HEK293 (cell line): ENCODE measurements at regions of chr17 and their contacts with region 1.

Region 1: DNA sequence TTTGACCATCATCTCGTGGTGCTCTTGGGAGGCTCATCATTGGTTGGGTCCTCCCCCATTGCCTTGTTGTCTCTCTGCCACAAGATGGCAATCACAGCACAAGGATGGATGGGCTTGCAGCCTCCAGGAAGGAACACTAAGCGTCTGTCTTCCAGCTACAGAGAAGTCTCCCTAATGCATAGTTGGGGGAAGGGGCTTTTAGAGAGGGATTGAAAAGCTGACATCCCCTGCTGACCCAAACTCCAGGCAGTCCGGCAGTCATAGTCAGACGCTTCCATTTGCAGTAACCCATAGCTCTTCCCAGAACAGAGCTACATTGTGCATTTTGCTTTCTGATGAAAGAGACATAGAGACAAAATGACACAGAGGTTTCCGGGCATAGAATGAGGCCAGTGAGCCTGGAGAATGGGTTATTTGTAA is 111.4 kb downstream of the UTP18 start:
- H3K4me3 ChIP-seq: no peak overlapping the region
- H3K27ac ChIP-seq: no peak overlapping the region
- H3K4me1 ChIP-seq: no peaks in the 10 kb centered on the region
- CTCF ChIP-seq: peak; percentile 78

Region 2: DNA sequence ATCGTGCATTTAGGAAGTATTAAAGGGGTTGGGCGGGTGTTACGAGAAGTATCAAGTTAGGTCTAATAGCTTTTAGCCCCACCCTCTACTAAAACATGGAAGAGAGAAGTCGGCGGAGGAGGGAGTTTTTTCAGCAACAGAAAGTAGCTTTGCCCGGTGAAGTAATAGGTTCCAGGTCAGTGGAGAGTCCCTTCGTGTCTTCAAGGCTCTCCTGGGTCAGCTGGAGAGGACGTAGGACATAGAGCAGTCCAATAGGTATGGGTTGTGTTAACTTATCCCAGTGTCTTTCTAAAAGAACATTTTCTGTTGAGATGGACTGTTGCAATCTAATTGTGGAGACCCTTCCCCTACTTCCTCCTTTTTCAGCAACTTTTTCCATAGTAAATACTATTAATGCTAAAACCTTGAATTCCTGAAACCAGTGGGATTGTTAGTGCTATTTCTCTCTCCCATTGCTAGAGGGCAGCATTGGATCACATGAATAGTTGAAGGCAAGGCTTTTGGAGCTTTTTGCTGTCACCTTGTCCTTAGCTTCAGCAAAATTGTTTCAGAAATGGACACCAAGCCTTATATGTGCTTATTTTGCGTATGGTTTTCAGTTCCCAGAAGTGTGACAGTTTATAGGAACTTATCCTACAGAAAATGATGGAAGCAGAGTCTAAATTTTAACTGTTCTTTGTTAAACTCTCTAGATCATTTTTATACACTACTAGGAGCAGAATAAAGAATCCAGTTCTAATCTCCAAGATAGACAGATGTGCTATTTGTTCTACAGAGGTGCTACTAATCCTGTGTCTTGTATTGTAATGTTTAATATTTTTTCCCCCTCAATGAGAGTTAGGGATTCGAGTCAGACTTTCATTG is 73.0 kb before region 1 on chr17:
- CTCF ChIA-PET with region 1: interaction called, 27 read pairs
- POLR2A ChIA-PET with region 1: no interaction called
- H3K4me3 ChIP-seq: no peak overlapping the region
- H3K27ac ChIP-seq: no peak overlapping the region
- H3K4me1 ChIP-seq: no peaks in the 10 kb centered on the region
- CTCF ChIP-seq: peak; percentile 53; the same call in 1 of the 2 replicates

Region 3: GRCh38 chr17:51359055-51359454 is 12.7 kb before region 1 on chr17:
- CTCF ChIA-PET with region 1: interaction called, 11 read pairs
- POLR2A ChIA-PET with region 1: no interaction called
- H3K4me3 ChIP-seq: no peak overlapping the region
- H3K27ac ChIP-seq: no peak overlapping the region
- H3K4me1 ChIP-seq: peaks cover 6% of the 10 kb centered on the region; the same call in 1 of the 2 replicates
- CTCF ChIP-seq: no peak

Region 4: DNA sequence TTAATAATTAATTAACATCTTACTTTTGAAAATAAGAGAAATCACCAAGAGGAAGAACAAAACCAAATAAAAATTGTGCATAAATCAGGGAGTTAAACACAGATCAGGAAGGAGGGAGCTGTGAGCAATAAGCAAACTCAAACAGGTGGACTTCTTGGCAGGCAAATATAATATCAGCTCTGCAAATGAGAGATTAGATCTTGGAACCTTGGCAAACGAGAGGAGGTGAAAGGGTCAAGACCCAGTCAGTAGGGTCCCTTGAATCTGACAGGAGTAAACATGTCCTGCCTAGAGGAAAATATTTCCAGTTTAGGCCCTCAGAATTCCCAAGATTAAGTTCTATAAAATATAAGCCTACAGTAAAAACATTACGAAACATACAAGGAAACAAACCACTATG is 42.0 kb after region 1 on chr17:
- CTCF ChIA-PET with region 1: no interaction called
- POLR2A ChIA-PET with region 1: no interaction called
- H3K4me3 ChIP-seq: no peak overlapping the region
- H3K27ac ChIP-seq: no peak overlapping the region
- H3K4me1 ChIP-seq: no peaks in the 10 kb centered on the region
- CTCF ChIP-seq: no peak

Region 5: DNA sequence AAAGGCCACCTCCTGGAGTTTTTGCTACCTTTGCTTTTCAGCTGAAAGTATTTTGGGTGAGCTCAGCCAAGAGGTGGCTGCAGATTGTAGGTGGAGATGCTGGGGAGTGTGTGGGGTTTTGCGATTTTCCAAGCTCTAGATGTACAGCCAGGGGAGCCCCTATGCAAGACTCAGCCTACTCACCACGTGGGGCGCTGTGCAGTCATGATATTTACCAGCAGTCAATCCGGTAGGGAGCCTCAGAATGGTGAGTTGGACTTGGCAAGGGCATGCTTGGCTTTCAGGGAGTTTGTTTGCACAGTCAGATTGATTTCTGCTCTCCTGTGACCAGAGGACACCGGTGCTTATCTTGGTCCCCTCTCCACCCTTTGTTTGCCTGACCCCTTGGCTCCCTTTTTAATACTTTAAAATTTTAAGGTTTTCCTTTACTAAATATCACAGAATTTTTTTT is 63.9 kb after region 1 on chr17:
- CTCF ChIA-PET with region 1: interaction called, 20 read pairs
- POLR2A ChIA-PET with region 1: no interaction called
- H3K4me3 ChIP-seq: no peak overlapping the region
- H3K27ac ChIP-seq: no peak overlapping the region
- H3K4me1 ChIP-seq: peaks cover 6% of the 10 kb centered on the region
- CTCF ChIP-seq: peak; percentile 80

Region 6: DNA sequence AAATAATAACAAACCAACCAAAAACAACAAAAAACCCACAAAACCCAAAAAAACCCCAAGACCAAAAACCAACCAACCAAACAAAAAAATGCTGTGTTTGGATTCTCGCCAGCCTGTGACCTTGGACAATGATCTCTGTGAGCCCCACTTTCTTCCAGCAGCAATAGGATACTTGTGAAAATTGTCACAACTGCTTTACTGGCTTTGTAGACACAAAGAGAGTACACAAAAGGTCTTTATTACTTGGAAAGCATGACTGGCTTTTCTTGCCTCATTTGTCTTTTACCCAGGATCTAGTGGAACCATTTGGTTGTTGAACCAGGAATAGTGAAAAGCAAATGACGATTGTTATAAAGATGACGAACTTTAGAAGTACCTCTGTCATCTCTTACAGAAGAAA is 145.2 kb after region 1 on chr17:
- CTCF ChIA-PET with region 1: no interaction called
- POLR2A ChIA-PET with region 1: no interaction called
- H3K4me3 ChIP-seq: no peak overlapping the region
- H3K27ac ChIP-seq: no peak overlapping the region
- H3K4me1 ChIP-seq: no peaks in the 10 kb centered on the region
- CTCF ChIP-seq: no peak

Region 7: DNA sequence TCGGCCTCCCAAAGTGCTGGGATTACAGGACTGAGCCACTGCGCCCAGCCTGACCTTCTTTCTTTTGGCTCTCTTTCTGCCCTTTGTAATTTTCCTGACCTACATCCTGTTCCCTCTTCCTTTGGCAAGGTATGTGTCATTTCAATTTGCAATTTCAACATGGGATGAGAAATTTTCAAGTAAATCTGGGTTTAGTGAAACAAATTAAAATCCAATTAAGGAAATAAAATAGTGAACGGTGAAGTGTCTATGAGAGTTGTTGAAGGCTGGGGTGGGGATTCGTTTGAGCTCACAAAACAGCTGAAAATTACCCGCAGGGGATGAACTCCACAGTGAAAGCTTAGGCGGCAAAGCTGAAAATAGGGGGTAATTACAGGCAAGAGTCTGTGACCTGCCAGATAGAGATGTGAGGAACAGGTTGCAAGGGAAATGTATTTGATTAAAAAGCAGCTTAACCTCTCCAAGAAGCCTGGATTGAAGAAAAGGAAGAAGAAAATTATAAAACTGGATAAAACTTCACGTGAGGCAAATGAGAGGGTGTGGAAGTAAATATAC is 166.3 kb after region 1 on chr17:
- CTCF ChIA-PET with region 1: interaction called, 22 read pairs
- POLR2A ChIA-PET with region 1: no interaction called
- H3K4me3 ChIP-seq: no peak overlapping the region
- H3K27ac ChIP-seq: no peak overlapping the region
- H3K4me1 ChIP-seq: no peaks in the 10 kb centered on the region
- CTCF ChIP-seq: no peak

Region 8: GRCh38 chr17:52106638-52107261 is 735.0 kb after region 1 on chr17:
- CTCF ChIA-PET with region 1: interaction called, 31 read pairs
- POLR2A ChIA-PET with region 1: no interaction called
- H3K4me3 ChIP-seq: no peak overlapping the region
- H3K27ac ChIP-seq: no peak overlapping the region
- H3K4me1 ChIP-seq: no peaks in the 10 kb centered on the region
- CTCF ChIP-seq: no peak